OCI-LY7 (cell line): ENCODE measurements at regions of chr16 and their contacts with region 1.

Region 1: GRCh38 chr16:31213877-31214708 is at the start of gene TRIM72:
- DNase-seq: no peak
- H3K4me3 ChIP-seq: no peak within 1 kb of the TSS
- H3K27ac ChIP-seq: no peak within 1 kb of the TSS
- H3K4me1 ChIP-seq: peaks cover 9% of the 10 kb centered on the region
- CTCF ChIP-seq: no peak
- total RNA-seq, gene TRIM72: 0.13 and 0.21 TPM in 2 replicates

Region 2: GRCh38 chr16:31084616-31085260 is 129.4 kb before region 1 on chr16:
- CTCF ChIA-PET with region 1: no interaction called
- POLR2A ChIA-PET with region 1: interaction called, 17 read pairs
- intact Hi-C with region 1: no loop called
- DNase-seq: no peak
- H3K4me3 ChIP-seq: no peak overlapping the region
- H3K27ac ChIP-seq: no peak overlapping the region
- H3K4me1 ChIP-seq: no peaks in the 10 kb centered on the region
- CTCF ChIP-seq: no peak